ENCODE measurements at regions of chr4 and their contacts with region 1.

Region 1: DNA sequence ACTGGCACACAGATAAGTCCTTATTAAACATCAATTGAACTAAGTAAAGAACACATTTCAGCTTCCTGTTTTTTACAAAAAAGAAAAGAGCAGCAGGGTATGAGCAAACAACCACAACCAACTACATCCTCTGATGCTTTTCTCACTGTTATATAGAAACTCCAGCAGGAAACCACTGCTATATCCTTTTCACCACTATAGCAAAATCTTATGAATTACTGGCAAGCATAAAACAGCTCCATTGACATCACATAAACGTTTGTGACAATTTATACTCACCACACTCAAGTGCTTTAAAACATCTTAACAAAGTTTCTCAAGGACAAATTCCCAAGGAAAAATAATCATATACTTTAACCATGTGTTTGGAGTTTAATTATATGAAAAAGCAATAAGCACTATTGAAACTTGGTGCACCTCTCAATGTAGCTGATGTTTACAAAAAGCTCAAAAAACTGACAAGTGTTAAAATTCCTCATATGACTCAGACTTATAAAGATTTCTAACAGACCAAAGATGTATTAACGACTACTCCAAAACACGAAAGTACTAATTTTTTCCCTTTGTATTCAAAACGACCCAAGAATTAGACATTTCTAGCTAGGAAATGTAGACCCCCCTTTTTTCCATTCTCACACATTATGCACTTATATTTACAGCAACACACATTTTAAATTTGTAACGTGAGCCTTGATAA is 12.9 kb downstream of the GPRIN3 start:
- DNase-seq: peak; percentile 81
- H3K4me3 ChIP-seq: peak overlapping the region; percentile 54
- H3K27ac ChIP-seq: peak overlapping the region; percentile 71
- H3K4me1 ChIP-seq: peaks cover 85% of the 10 kb centered on the region
- CTCF ChIP-seq: no peak

Region 2: GRCh38 chr4:89254847-89255246 is 39.9 kb before region 1 on chr4:
- CTCF ChIA-PET with region 1: interaction called, 3 read pairs
- POLR2A ChIA-PET with region 1: interaction called, 11 read pairs
- intact Hi-C with region 1: loop called (anchors 2 kb)
- DNase-seq: peak; percentile 48
- H3K4me3 ChIP-seq: no peak overlapping the region
- H3K27ac ChIP-seq: no peak overlapping the region
- H3K4me1 ChIP-seq: no peaks in the 10 kb centered on the region
- CTCF ChIP-seq: peak; percentile 99

Region 3: DNA sequence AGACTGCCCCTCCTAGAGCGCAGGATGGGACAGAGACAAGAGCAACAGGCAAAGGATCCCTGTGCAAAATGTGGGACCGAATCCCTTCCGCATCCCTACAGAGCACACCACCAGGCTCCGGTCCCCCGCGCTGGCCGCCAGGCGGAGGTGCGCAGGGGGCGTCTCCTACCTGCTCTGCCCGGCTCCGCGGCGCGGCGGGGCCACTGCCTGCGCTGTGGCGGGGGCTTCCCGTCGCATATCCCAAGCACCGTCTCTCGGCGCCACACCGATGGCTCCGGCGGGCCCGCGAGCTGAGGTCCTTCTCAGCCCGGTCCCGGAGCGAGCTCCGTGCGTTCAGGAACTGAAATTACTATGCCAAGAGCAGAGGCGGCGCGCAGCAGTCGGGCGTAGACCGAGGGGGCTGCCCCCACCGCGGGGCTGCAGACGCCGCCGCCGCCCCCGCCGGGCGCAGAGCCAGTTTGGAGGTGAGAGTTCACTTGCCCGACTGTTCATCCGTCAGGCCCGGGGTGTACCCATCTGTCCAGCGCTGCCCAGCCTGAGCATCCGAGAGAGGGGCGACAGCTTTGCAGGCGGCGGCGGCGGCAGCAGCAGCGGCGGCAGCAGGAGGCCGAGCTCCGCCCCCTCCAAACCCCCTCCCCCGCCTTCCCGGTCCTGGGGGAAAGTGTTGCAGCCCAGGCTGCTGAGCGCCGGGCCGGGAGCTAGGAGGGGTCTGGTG is 12.9 kb after region 1 on chr4 and contains the start of gene GPRIN3:
- CTCF ChIA-PET with region 1: no interaction called
- POLR2A ChIA-PET with region 1: interaction called, 38 read pairs
- intact Hi-C with region 1: no loop called
- DNase-seq: peak; percentile 67
- H3K4me3 ChIP-seq: peak within 1 kb of the TSS; percentile 82
- H3K27ac ChIP-seq: peak within 1 kb of the TSS; percentile 26
- H3K4me1 ChIP-seq: peaks cover 48% of the 10 kb centered on the region
- CTCF ChIP-seq: no peak
- total RNA-seq, gene GPRIN3: 3.6 and 4.6 TPM in 2 replicates

Region 4: GRCh38 chr4:89316931-89317366 is 22.2 kb after region 1 on chr4:
- CTCF ChIA-PET with region 1: interaction called, 5 read pairs
- POLR2A ChIA-PET with region 1: interaction called, 69 read pairs
- intact Hi-C with region 1: loop called (anchors 1 kb)
- DNase-seq: peak; percentile 68
- H3K4me3 ChIP-seq: peak overlapping the region; percentile 48
- H3K27ac ChIP-seq: peak overlapping the region; percentile 73
- H3K4me1 ChIP-seq: peaks cover 50% of the 10 kb centered on the region
- CTCF ChIP-seq: no peak

Region 5: DNA sequence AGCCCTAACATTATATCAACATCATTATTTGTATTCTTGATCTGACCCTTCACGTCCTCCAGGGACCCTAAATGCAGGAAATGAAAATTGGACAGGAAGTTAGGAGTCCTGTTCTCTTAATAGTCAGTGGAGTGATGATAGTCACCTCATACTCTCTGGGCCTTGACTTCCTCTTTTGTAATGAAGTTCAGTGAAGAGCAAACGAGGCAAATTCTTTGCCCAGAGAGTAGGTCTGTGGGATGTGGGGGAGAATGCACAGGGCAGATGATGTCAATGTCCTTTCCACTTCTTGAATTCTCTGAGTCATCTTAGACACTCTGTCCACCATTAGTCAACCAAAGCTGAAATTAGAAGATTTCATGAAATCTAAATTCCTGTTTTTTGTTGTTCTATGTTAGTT is 29.9 kb after region 1 on chr4:
- CTCF ChIA-PET with region 1: no interaction called
- POLR2A ChIA-PET with region 1: interaction called, 22 read pairs
- intact Hi-C with region 1: loop called (anchors 2 kb)
- DNase-seq: peak; percentile 82
- H3K4me3 ChIP-seq: peak overlapping the region; percentile 20
- H3K27ac ChIP-seq: peak overlapping the region; percentile 43
- H3K4me1 ChIP-seq: peaks cover 22% of the 10 kb centered on the region
- CTCF ChIP-seq: no peak

Region 6: DNA sequence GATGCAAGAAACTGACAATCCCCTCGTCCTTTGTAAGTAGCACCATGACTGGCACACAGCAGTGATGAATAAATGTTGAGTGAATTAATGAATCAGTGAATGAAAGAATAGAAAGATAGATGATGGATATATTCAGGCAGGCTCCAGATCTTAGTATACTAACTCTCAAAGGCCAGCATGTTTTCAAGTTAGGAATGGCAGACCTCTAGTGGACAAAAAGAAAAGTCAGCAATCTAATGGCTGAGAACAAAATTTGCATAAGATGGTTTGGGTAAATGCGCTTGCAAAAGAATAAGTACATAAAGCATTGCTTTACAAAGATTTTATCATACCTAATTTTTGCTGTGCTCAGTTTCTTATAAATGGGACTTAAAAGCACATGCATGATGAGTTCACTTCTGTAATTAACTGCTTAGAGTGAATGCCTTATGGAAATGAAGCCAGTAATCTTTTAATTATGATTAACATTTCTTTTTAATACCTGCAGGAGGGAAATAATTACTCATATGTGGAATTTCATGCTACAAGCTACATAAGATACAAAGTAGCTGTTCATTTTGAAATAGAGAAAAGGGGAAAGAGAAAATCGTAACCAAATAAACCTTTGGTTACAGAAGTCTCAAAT is 139.8 kb after region 1 on chr4:
- CTCF ChIA-PET with region 1: no interaction called
- POLR2A ChIA-PET with region 1: interaction called, 6 read pairs
- intact Hi-C with region 1: loop called (anchors 2 kb)
- DNase-seq: peak; percentile 64
- H3K4me3 ChIP-seq: no peak overlapping the region
- H3K27ac ChIP-seq: no peak overlapping the region
- H3K4me1 ChIP-seq: no peaks in the 10 kb centered on the region
- CTCF ChIP-seq: peak; percentile 96